ENCODE measurements at regions of chr2 and their contacts with region 1.

Region 1: DNA sequence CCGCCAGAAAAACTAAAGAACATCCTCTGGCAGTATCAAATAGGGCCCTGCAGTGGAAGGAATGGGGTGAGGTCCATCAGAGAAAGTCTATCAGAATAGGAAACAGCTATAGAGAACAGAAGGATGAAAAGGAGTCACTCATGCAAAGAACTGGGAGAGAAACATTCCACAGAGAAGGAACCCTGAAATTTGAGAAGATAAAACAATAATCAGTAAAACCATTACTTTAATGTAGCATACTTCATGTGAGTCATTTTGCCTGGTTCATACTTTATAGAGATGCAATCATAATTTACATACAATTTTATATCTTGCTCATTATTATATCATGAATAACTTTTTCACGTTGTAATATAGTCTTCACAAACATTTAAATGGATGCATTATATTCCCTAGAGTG is 402.2 kb downstream of the NCKAP5 start:
- DNase-seq: peak; percentile 69
- ATAC-seq: peak; percentile 78
- H3K4me3 ChIP-seq: no peak overlapping the region
- H3K27ac ChIP-seq: peak overlapping the region; percentile 57; the same call in 1 of the 2 replicates
- H3K4me1 ChIP-seq: peaks cover 14% of the 10 kb centered on the region
- H3K27me3 ChIP-seq: no peaks in the 10 kb centered on the region
- CTCF ChIP-seq: no peak
- POLR2A ChIP-seq: no peak
- RAD21 ChIP-seq: no peak

Region 2: DNA sequence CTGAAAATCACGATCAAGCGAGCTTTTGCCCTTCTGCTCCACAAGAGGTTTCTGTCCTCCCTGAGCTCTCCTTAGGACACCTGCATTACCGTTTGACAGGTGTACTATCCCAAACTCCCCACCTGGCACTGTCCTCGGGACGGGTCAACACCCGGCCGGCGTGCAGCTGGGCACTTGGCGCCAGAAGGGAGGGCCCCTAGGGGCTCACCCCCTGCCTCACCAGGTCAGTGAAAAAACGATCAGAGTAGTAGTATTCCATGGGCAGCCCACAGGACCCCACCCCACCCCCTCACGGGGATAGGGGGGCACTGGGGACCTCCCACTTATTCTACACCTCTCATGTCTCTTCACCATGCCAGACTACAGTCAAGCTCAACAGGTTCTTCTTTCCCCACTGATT is 886.7 kb before region 1 on chr2:
- CTCF ChIA-PET with region 1: no interaction called
- POLR2A ChIA-PET with region 1: no interaction called
- dilution Hi-C with region 1: no loop called
- in situ Hi-C with region 1: no loop called
- intact Hi-C with region 1: no loop called
- DNase-seq: no peak
- ATAC-seq: no peak
- H3K4me3 ChIP-seq: no peak overlapping the region
- H3K27ac ChIP-seq: no peak overlapping the region
- H3K4me1 ChIP-seq: no peaks in the 10 kb centered on the region
- H3K27me3 ChIP-seq: no peaks in the 10 kb centered on the region
- CTCF ChIP-seq: no peak
- POLR2A ChIP-seq: no peak
- RAD21 ChIP-seq: no peak

Region 3: GRCh38 chr2:132651115-132652045 is 514.7 kb before region 1 on chr2:
- CTCF ChIA-PET with region 1: interaction called, 3 read pairs
- POLR2A ChIA-PET with region 1: no interaction called
- dilution Hi-C with region 1: no loop called
- in situ Hi-C with region 1: loop called (anchors 5 kb)
- intact Hi-C with region 1: loop called (anchors 5 kb)
- DNase-seq: peak; percentile 71
- ATAC-seq: peak; percentile 91
- H3K4me3 ChIP-seq: no peak overlapping the region
- H3K27ac ChIP-seq: peak overlapping the region; percentile 4
- H3K4me1 ChIP-seq: peaks cover 13% of the 10 kb centered on the region
- H3K27me3 ChIP-seq: no peaks in the 10 kb centered on the region
- CTCF ChIP-seq: peak; percentile 71
- POLR2A ChIP-seq: no peak
- RAD21 ChIP-seq: peak; percentile 74

Region 4: DNA sequence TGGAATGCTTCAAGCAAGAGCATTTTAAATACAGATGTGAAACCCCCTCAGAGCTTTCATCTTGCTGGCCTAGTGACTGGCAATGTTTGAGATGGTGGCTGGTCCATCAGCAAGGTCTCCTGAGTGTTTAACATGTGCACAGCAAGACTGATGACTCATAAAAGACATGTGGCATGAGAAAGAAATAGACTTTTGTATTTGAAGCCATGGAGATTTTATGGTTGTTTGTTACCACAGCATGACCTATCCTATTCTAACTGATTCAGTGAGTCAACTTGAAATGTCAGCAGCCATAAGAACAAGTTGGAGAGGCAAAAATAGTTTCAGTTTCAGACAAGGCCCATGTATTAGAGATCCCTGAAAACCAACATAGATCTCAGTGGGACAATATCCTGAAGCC is 341.3 kb before region 1 on chr2:
- CTCF ChIA-PET with region 1: no interaction called
- POLR2A ChIA-PET with region 1: no interaction called
- dilution Hi-C with region 1: no loop called
- in situ Hi-C with region 1: no loop called
- intact Hi-C with region 1: no loop called
- DNase-seq: peak; percentile 77
- ATAC-seq: peak; percentile 66
- H3K4me3 ChIP-seq: no peak overlapping the region
- H3K27ac ChIP-seq: no peak overlapping the region
- H3K4me1 ChIP-seq: no peaks in the 10 kb centered on the region
- H3K27me3 ChIP-seq: no peaks in the 10 kb centered on the region
- CTCF ChIP-seq: no peak
- POLR2A ChIP-seq: no peak
- RAD21 ChIP-seq: no peak